ENCODE measurements at regions of chr6 and their contacts with region 1.

Region 1: GRCh38 chr6:47413752-47414422 is 63.7 kb upstream of the CD2AP start:
- DNase-seq: no peak
- ATAC-seq: peak; percentile 79
- H3K4me3 Mint-ChIP-seq: peak overlapping the region; percentile 79
- H3K27ac Mint-ChIP-seq: no peak overlapping the region
- H3K4me1 Mint-ChIP-seq: peaks cover 17% of the 10 kb centered on the region
- H3K27me3 Mint-ChIP-seq: no peaks in the 10 kb centered on the region
- CTCF ChIP-seq: no peak

Region 2: DNA sequence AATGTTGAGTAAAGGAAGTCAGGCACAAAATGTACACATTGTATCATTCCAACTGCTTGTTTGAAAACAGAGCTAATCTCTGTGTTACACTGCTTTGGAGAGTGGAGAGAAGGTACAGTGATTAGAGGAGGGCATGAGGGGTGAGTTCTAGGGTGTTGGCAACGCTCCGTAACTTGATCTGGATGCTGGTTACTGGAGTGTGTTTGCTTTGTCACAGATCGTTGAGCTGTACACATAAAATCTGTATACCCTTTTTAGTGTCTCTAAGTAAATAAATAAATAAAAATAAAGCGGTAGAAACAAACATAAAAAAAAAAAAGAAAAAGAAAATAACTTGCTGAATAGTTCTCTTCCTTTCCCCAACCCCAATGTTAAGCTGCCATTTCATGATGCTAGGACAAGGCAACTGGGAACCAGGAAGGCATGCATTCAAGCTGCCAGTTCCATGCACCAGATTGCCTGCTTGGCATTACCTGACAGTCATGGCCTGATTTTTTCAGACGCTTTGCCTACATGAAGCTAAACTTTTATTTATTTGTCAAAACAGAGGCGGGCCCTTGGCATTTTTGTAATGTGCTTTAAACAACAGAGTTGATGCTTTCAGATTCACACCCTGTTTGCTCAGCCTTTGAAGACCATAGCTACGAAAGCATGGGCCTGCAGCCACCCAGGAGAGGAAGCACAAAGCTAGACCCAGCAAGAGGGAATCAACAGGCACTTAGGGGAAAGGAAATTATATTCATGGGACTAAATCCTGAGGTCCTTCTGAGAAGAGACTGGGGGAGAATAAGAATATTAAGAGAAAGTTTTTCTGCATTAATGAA is 125.4 kb before region 1 on chr6:
- CTCF ChIA-PET with region 1: no interaction called
- POLR2A ChIA-PET with region 1: no interaction called
- intact Hi-C with region 1: no loop called
- DNase-seq: no peak
- ATAC-seq: no peak
- H3K4me3 Mint-ChIP-seq: no peak overlapping the region
- H3K27ac Mint-ChIP-seq: no peak overlapping the region
- H3K4me1 Mint-ChIP-seq: no peaks in the 10 kb centered on the region
- H3K27me3 Mint-ChIP-seq: no peaks in the 10 kb centered on the region
- CTCF ChIP-seq: no peak

Region 3: DNA sequence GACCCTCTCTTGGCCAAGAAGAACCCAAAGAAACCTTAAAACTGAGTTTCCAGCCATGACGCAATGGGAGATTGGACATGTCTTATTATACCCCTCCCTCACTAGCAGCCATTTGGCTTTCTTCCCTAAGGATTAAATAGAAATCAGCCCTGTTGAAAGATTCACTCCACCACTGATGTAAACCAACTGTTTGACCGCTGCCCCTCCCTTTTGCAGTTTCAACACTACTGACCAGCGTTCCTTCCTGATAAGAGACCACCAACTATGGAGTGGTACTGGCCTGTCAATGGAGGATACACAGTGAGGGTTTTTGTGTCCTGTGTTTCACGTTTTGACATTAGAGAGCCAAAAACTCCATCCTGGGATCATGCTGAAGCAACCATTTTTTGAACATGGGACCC is 10.5 kb after region 1 on chr6:
- CTCF ChIA-PET with region 1: no interaction called
- POLR2A ChIA-PET with region 1: no interaction called
- intact Hi-C with region 1: no loop called
- DNase-seq: no peak
- ATAC-seq: no peak
- H3K4me3 Mint-ChIP-seq: no peak overlapping the region
- H3K27ac Mint-ChIP-seq: no peak overlapping the region
- H3K4me1 Mint-ChIP-seq: no peaks in the 10 kb centered on the region
- H3K27me3 Mint-ChIP-seq: peaks cover 2% of the 10 kb centered on the region
- CTCF ChIP-seq: no peak

Region 4: DNA sequence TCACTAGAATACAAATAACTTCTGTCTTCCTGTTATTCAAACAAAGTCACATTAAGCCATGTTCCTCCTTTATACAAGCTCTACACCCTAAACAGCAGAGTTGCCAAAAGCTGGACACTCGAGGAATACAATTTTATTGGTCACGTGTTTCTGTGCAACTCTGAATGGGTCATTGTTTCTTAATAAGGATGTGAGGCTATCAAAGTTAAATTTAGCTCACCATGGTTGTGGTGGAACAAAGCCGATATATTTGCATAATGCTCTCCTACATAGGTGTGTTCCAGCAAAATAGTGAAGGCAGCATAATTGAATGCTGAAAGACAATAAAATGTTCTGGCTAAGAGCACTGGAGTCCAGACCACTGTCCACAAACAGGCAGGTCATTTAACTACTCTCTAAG is 26.8 kb after region 1 on chr6:
- CTCF ChIA-PET with region 1: interaction called, 3 read pairs
- POLR2A ChIA-PET with region 1: no interaction called
- intact Hi-C with region 1: loop called (anchors 2 kb)
- DNase-seq: no peak
- ATAC-seq: peak; percentile 34
- H3K4me3 Mint-ChIP-seq: peak overlapping the region; percentile 38
- H3K27ac Mint-ChIP-seq: no peak overlapping the region
- H3K4me1 Mint-ChIP-seq: peaks cover 48% of the 10 kb centered on the region
- H3K27me3 Mint-ChIP-seq: no peaks in the 10 kb centered on the region
- CTCF ChIP-seq: no peak

Region 5: GRCh38 chr6:47477497-47478232 is 63.8 kb after region 1 on chr6 and contains the start of gene CD2AP:
- CTCF ChIA-PET with region 1: interaction called, 21 read pairs
- POLR2A ChIA-PET with region 1: interaction called, 26 read pairs
- intact Hi-C with region 1: loop called (anchors 1 kb)
- DNase-seq: peak; percentile 91
- ATAC-seq: peak; percentile 89
- H3K4me3 Mint-ChIP-seq: peak within 1 kb of the TSS; percentile 90
- H3K27ac Mint-ChIP-seq: peak within 1 kb of the TSS; percentile 97
- H3K4me1 Mint-ChIP-seq: peaks cover 43% of the 10 kb centered on the region
- H3K27me3 Mint-ChIP-seq: no peaks in the 10 kb centered on the region
- CTCF ChIP-seq: no peak
- total RNA-seq, gene CD2AP: 31.1 and 34.1 TPM in 2 replicates

Region 6: DNA sequence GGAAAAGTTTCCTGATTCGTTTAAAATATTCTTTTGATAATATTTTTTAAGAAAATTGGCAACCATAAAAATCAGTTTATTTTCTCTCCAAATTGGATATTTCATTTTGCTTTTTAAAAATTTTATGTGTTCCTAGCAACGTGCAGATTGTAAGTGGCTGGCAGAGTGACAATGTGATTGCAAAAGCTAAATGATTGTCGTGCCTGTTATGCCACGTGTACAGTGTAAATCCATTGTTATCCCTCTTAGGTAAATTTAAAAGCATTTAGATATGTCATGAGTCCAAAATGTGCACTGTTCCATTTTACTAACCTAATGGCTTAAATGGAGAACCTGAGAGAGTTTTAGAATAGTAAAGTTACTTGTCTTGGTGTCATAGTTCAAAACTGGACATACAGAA is 190.1 kb after region 1 on chr6:
- CTCF ChIA-PET with region 1: interaction called, 3 read pairs
- POLR2A ChIA-PET with region 1: no interaction called
- intact Hi-C with region 1: loop called (anchors 5 kb)
- DNase-seq: no peak
- ATAC-seq: no peak
- H3K4me3 Mint-ChIP-seq: no peak overlapping the region
- H3K27ac Mint-ChIP-seq: no peak overlapping the region
- H3K4me1 Mint-ChIP-seq: no peaks in the 10 kb centered on the region
- H3K27me3 Mint-ChIP-seq: no peaks in the 10 kb centered on the region
- CTCF ChIP-seq: no peak

Region 7: GRCh38 chr6:47733879-47734558 is 320.1 kb after region 1 on chr6:
- CTCF ChIA-PET with region 1: interaction called, 18 read pairs
- POLR2A ChIA-PET with region 1: interaction called, 3 read pairs
- intact Hi-C with region 1: loop called (anchors 1 kb)
- DNase-seq: no peak
- ATAC-seq: no peak
- H3K4me3 Mint-ChIP-seq: no peak overlapping the region
- H3K27ac Mint-ChIP-seq: no peak overlapping the region
- H3K4me1 Mint-ChIP-seq: no peaks in the 10 kb centered on the region
- H3K27me3 Mint-ChIP-seq: peaks cover 2% of the 10 kb centered on the region
- CTCF ChIP-seq: no peak